Dendritic cell treated with granulocyte-macrophage colony-stimulating factor and Interleukin-4, amounts not matched to agents 40 ng/mL and 50 ng/mL, for 4 days (primary cell): ENCODE measurements at regions of chr10 and their contacts with region 1.

Region 1: GRCh38 chr10:59625721-59626522 is 83.7 kb downstream of the SLC16A9 start:
- H3K4me3 Mint-ChIP-seq: no peak overlapping the region
- H3K27ac Mint-ChIP-seq: no peak overlapping the region
- H3K4me1 Mint-ChIP-seq: peaks cover 5% of the 10 kb centered on the region
- H3K27me3 Mint-ChIP-seq: no peaks in the 10 kb centered on the region

Region 2: GRCh38 chr10:58952747-58953466 is 673.0 kb before region 1 on chr10:
- intact Hi-C with region 1: loop called (anchors 10 kb)
- H3K4me3 Mint-ChIP-seq: no peak overlapping the region
- H3K27ac Mint-ChIP-seq: no peak overlapping the region
- H3K4me1 Mint-ChIP-seq: no peaks in the 10 kb centered on the region
- H3K27me3 Mint-ChIP-seq: peaks cover 3% of the 10 kb centered on the region

Region 3: DNA sequence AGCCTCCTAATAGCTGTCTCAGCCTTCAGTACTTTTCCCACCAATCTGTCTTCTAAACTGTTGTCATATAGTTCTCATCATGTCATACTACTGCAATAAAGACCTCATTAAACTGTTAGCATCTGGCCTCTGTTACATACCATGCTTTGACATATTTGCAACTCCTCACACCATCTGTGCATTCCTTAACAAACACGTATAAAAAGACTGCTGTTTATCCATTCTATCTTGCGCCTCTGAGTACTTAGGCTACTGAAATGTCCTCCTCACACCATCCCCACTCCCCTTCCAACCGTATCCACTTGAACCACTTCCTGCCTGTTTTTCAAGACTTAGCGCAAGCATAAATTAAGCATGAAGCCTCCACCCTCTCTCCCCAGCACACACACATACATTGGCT is 42.2 kb after region 1 on chr10:
- intact Hi-C with region 1: no loop called
- H3K4me3 Mint-ChIP-seq: no peak overlapping the region
- H3K27ac Mint-ChIP-seq: no peak overlapping the region
- H3K4me1 Mint-ChIP-seq: no peaks in the 10 kb centered on the region
- H3K27me3 Mint-ChIP-seq: no peaks in the 10 kb centered on the region

Region 4: DNA sequence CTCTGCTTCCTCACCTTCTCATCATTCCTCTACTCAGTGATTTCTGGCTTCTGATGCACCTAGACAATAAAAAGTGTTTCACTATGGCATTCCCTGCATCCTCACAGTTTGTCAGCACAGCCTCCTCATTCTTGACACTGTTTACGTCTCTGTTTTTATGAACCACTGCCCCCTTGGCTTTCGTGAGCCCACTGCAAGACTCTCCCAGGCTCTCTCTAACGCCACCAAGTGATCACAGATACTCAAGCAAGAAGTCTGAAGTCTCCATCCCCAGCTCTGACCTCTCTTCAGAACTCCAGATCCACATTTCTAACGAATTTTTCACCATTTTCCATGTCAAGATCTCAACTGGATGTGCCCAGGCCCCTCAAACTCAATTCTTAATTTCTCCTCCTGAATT is 74.8 kb after region 1 on chr10:
- intact Hi-C with region 1: no loop called
- H3K4me3 Mint-ChIP-seq: no peak overlapping the region
- H3K27ac Mint-ChIP-seq: no peak overlapping the region
- H3K4me1 Mint-ChIP-seq: no peaks in the 10 kb centered on the region
- H3K27me3 Mint-ChIP-seq: no peaks in the 10 kb centered on the region

Region 5: DNA sequence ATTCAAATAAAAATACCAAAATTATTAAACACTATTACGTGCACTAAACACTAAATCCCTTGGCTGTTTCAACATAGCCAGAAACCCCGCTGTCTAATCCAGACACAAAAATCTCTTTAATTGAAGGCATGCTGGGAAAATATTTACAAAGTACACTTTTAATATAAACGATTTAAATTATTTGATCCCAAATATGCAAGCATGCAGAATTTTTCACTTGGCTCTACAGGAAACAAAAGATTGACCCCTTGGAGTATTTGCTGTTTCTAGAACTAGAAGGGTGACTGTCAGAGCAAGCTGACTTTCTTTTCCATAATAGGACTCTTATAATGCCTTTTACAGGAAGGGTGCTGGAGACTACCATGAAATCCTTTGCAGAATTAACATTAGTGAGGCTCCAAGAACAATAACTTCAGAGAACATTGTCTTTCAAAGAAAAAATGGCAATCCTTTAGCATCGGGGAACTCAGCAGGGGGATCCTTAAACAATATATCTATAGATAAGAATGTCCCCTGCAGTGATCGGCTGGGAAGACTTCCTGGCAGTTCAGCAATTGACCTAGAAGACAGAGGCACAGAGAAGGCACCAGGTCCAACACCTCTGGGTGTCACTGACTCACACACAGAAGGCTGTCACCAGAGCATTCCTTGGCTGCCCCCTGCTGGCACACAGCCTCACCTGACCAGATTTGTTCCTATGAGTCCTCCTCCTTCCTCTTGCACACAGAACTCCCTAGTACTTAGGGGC is 183.1 kb after region 1 on chr10:
- intact Hi-C with region 1: loop called (anchors 1 kb)
- H3K4me3 Mint-ChIP-seq: no peak overlapping the region
- H3K27ac Mint-ChIP-seq: no peak overlapping the region
- H3K4me1 Mint-ChIP-seq: peaks cover 21% of the 10 kb centered on the region
- H3K27me3 Mint-ChIP-seq: no peaks in the 10 kb centered on the region

Region 6: GRCh38 chr10:60032723-60033122 is 406.8 kb after region 1 on chr10:
- intact Hi-C with region 1: loop called (anchors 2 kb)
- H3K4me3 Mint-ChIP-seq: no peak overlapping the region
- H3K27ac Mint-ChIP-seq: peak overlapping the region; percentile 66
- H3K4me1 Mint-ChIP-seq: peaks cover 35% of the 10 kb centered on the region
- H3K27me3 Mint-ChIP-seq: no peaks in the 10 kb centered on the region

Region 7: GRCh38 chr10:60099998-60100747 is 474.3 kb after region 1 on chr10:
- intact Hi-C with region 1: loop called (anchors 10 kb)
- H3K4me3 Mint-ChIP-seq: no peak overlapping the region
- H3K27ac Mint-ChIP-seq: no peak overlapping the region
- H3K4me1 Mint-ChIP-seq: no peaks in the 10 kb centered on the region
- H3K27me3 Mint-ChIP-seq: no peaks in the 10 kb centered on the region

Region 8: DNA sequence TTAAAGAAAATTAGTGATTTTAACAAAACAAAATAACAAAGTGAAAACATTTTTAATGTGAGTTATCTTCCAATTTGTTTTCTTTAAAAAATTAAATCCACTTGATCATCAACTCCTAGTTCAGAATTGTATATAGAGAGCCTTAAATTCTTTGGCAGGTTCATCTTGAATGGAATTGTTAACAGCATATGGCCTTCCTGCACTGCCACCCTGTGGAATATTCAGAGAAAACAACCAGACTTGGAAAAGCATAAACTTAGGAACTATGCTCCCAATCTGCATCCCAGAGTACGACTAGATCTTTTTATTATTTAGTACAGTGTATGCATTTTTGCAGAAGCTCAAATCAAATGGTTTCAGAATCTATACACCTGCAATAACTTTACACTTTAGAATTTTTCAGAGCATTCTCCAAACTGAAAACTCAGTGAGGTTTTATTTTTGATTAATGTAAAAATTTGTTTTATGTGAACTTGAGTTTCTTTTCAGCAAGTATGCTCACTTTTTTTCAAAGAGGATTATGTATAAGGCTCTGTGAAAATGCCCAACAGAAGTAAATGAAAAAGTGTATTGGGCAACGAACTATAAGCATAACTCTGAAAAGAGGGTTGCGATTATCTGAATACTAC is 808.6 kb after region 1 on chr10:
- intact Hi-C with region 1: loop called (anchors 2 kb)
- H3K4me3 Mint-ChIP-seq: no peak overlapping the region
- H3K27ac Mint-ChIP-seq: no peak overlapping the region
- H3K4me1 Mint-ChIP-seq: no peaks in the 10 kb centered on the region
- H3K27me3 Mint-ChIP-seq: no peaks in the 10 kb centered on the region